HepG2 (cell line): ENCODE measurements at regions of chr14 and their contacts with region 1.

Region 1: GRCh38 chr14:49620182-49621113 is at the starts of genes MGAT2 and RPL36AL:
- DNase-seq: peak; percentile 95
- ATAC-seq: peak; percentile 97
- H3K4me3 ChIP-seq: peak within 1 kb of the TSS; percentile 81 to 92 (median 92)
- H3K27ac ChIP-seq: peak within 1 kb of the TSS; percentile 94
- H3K4me1 ChIP-seq: peaks cover 62% of the 10 kb centered on the region
- H3K27me3 ChIP-seq: no peaks in the 10 kb centered on the region; a peak in 1 of 5 replicates
- CTCF ChIP-seq: peak; percentile 46
- EP300 ChIP-seq: peak in 1 of 2 experiments; percentile 57; a peak in 1 of 4 replicates
- POLR2A ChIP-seq: peak; percentile 97 to 98
- RAD21 ChIP-seq: peak; percentile 63
- total RNA-seq, gene MGAT2: 47.2 and 51.9 TPM in 2 replicates
- total RNA-seq, gene RPL36AL: 294 and 383 TPM in 2 replicates

Region 2: DNA sequence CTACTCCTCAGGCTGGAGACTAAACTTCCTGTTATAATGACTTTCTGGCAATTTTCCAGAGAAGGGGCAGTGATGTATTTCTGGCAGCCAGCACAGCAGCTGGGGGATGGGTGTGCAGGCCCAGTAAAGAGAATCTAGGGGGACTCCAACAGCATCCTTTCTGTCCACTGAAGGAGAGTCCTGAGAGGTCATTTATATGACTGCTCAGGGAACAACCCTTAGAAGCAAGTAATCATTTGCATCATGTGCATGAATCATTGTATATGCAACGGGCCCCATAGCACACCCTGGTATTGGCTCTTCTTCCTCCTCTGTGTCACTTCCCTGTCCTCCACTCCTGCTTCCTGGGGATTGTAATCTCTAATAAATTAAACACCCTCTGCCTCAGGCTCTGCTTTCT is 528.1 kb before region 1 on chr14:
- CTCF ChIA-PET with region 1: no interaction called
- POLR2A ChIA-PET with region 1: no interaction called
- in situ Hi-C with region 1: no loop called
- intact Hi-C with region 1: no loop called
- DNase-seq: no peak
- ATAC-seq: no peak
- H3K4me3 ChIP-seq: no peak overlapping the region
- H3K27ac ChIP-seq: no peak overlapping the region
- H3K4me1 ChIP-seq: no peaks in the 10 kb centered on the region
- H3K27me3 ChIP-seq: no peaks in the 10 kb centered on the region
- CTCF ChIP-seq: no peak
- EP300 ChIP-seq: no peak
- POLR2A ChIP-seq: no peak
- RAD21 ChIP-seq: no peak

Region 3: GRCh38 chr14:49585803-49586672 is 34.4 kb before region 1 on chr14 and contains the start of gene RPS29:
- CTCF ChIA-PET with region 1: no interaction called
- POLR2A ChIA-PET with region 1: interaction called, 62 read pairs
- in situ Hi-C with region 1: no loop called
- intact Hi-C with region 1: loop called (anchors 2 kb)
- DNase-seq: peak; percentile 99
- ATAC-seq: peak; percentile 85
- H3K4me3 ChIP-seq: peak within 1 kb of the TSS; percentile 82 to 98 (median 94)
- H3K27ac ChIP-seq: peak within 1 kb of the TSS; percentile 89
- H3K4me1 ChIP-seq: peaks cover 48% of the 10 kb centered on the region
- H3K27me3 ChIP-seq: no peaks in the 10 kb centered on the region; a peak in 1 of 5 replicates
- CTCF ChIP-seq: no peak; the same call in 1 of the 2 replicates
- EP300 ChIP-seq: 0 out of 4 replicates have a peak, but pooled peaks of 1 of the 2 experiments have one; percentile 52
- POLR2A ChIP-seq: peak; percentile 89 to 98
- RAD21 ChIP-seq: peak; percentile 17
- total RNA-seq, gene RPS29: 3,901 and 4,303 TPM in 2 replicates

Region 4: DNA sequence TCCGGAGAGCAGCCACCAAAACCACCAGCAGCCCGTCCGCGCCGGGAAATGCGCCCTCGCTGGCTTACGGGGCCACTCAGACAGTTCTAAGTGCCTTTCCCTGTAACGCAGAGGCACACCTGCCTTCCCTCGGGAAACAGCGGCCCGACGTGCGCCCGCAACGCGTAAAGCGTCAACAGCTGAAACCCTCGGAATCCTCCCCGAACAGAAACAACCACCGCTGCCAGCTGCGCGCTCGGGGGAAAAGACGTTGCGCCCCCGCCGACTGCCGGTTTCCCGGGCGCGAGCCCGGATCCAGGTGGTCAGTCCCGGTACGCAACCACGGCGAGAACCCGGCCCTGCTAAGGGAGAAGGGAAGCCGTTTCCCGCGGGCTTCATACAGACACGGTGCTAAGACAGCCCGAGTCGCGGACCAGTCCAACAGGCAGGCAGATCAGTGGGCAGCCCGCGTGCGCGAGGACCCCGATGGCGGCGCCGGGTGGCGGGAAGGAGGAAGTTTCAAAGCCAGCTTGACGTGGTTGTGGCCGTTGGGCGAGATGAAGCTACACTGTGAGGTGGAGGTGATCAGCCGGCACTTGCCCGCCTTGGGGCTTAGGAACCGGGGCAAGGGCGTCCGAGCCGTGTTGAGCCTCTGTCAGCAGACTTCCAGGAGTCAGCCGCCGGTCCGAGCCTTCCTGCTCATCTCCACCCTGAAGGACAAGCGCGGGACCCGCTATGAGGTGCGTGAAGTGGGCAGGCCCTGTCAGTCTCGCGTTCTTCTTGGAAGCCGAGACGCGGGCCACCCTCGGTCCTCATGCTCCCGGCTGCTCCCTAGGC is 21.8 kb before region 1 on chr14 and contains the start of gene LRR1:
- CTCF ChIA-PET with region 1: no interaction called
- POLR2A ChIA-PET with region 1: interaction called, 62 read pairs
- in situ Hi-C with region 1: no loop called
- intact Hi-C with region 1: loop called (anchors 2 kb)
- DNase-seq: peak; percentile 76
- ATAC-seq: peak; percentile 76
- H3K4me3 ChIP-seq: peak within 1 kb of the TSS; percentile 79 to 91 (median 83)
- H3K27ac ChIP-seq: peak within 1 kb of the TSS; percentile 97
- H3K4me1 ChIP-seq: peaks cover 39% of the 10 kb centered on the region
- H3K27me3 ChIP-seq: no peaks in the 10 kb centered on the region; a peak in 1 of 5 replicates
- CTCF ChIP-seq: 0 out of 2 replicates have a peak, but pooled peaks have one; percentile 12
- EP300 ChIP-seq: no peak
- POLR2A ChIP-seq: peak; percentile 67 to 93
- RAD21 ChIP-seq: peak; percentile 30
- total RNA-seq, gene LRR1: 36.2 and 49.8 TPM in 2 replicates

Region 5: DNA sequence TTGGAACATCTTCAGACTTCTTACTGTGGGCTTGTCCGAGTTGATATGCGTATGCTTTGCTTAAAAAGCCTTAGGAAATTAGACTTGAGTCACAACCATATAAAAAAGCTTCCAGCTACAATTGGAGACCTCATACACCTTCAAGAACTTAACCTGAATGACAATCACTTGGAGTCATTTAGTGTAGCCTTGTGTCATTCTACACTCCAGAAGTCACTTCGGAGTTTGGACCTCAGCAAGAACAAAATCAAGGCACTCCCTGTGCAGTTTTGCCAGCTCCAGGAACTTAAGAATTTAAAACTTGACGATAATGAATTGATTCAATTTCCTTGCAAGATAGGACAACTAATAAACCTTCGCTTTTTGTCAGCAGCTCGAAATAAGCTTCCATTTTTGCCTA is 12.9 kb before region 1 on chr14:
- CTCF ChIA-PET with region 1: no interaction called
- POLR2A ChIA-PET with region 1: interaction called, 14 read pairs
- in situ Hi-C with region 1: no loop called
- intact Hi-C with region 1: no loop called
- DNase-seq: no peak
- ATAC-seq: no peak
- H3K4me3 ChIP-seq: no peak overlapping the region
- H3K27ac ChIP-seq: no peak overlapping the region
- H3K4me1 ChIP-seq: peaks cover 12% of the 10 kb centered on the region
- H3K27me3 ChIP-seq: no peaks in the 10 kb centered on the region
- CTCF ChIP-seq: no peak
- EP300 ChIP-seq: no peak
- POLR2A ChIP-seq: no peak
- RAD21 ChIP-seq: no peak

Region 6: GRCh38 chr14:49653508-49653907 is 33.1 kb after region 1 on chr14:
- CTCF ChIA-PET with region 1: no interaction called
- POLR2A ChIA-PET with region 1: no interaction called
- in situ Hi-C with region 1: no loop called
- intact Hi-C with region 1: no loop called
- DNase-seq: no peak
- ATAC-seq: no peak
- H3K4me3 ChIP-seq: no peak overlapping the region
- H3K27ac ChIP-seq: no peak overlapping the region
- H3K4me1 ChIP-seq: no peaks in the 10 kb centered on the region
- H3K27me3 ChIP-seq: no peaks in the 10 kb centered on the region
- CTCF ChIP-seq: no peak
- EP300 ChIP-seq: no peak
- POLR2A ChIP-seq: no peak
- RAD21 ChIP-seq: no peak